ENCODE measurements at regions of chr7 and their contacts with region 1.

Region 1: DNA sequence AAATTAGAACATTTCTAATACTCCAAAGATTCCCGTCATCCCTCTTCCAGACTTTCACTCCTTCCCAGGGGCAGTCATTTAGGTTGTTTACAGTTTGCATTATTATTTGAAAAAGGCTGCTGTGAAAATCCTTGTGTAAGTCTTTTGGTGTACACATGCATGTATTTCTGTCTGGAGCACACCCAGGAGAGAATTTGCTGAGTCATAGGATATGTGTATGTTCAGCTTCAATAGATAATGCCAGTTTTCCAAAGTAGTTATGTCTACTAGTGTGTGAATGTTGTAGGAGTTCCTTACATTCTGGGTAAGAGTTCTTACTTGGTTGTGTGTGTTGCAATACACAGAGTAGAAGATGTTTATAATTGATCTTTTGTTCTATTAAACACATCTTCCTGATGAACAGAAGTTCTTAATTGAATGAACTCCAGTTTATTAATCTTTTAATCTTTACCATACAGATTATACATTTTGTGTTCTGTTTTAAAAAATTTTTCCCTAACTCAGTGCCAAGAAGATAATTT is 25.3 kb downstream of the CROT start:
- DNase-seq: no peak
- ATAC-seq: no peak
- H3K4me3 ChIP-seq: no peak overlapping the region
- H3K27ac ChIP-seq: no peak overlapping the region
- H3K4me1 ChIP-seq: no peaks in the 10 kb centered on the region
- H3K27me3 ChIP-seq: no peaks in the 10 kb centered on the region
- CTCF ChIP-seq: no peak
- POLR2A ChIP-seq: no peak

Region 2: GRCh38 chr7:87398446-87398845 is 27.7 kb after region 1 on chr7:
- in situ Hi-C with region 1: no loop called
- intact Hi-C with region 1: loop called (anchors 2 kb)
- DNase-seq: no peak
- ATAC-seq: no peak
- H3K4me3 ChIP-seq: no peak overlapping the region
- H3K27ac ChIP-seq: no peak overlapping the region
- H3K4me1 ChIP-seq: no peaks in the 10 kb centered on the region
- H3K27me3 ChIP-seq: no peaks in the 10 kb centered on the region
- CTCF ChIP-seq: no peak
- POLR2A ChIP-seq: no peak